K562 (cell line): ENCODE measurements at regions of chr6 and their contacts with region 1.

Region 1: GRCh38 chr6:85496009-85496579 is 46.2 kb downstream of the NT5E start:
- DNase-seq: no peak
- ATAC-seq: no peak
- H3K4me3 ChIP-seq: no peak overlapping the region
- H3K27ac ChIP-seq: no peak overlapping the region
- H3K4me1 ChIP-seq: no peaks in the 10 kb centered on the region
- H3K27me3 ChIP-seq: no peaks in the 10 kb centered on the region; a peak in 1 of 5 replicates
- CTCF ChIP-seq: no peak
- EP300 ChIP-seq: no peak
- POLR2A ChIP-seq: no peak
- RAD21 ChIP-seq: no peak

Region 2: DNA sequence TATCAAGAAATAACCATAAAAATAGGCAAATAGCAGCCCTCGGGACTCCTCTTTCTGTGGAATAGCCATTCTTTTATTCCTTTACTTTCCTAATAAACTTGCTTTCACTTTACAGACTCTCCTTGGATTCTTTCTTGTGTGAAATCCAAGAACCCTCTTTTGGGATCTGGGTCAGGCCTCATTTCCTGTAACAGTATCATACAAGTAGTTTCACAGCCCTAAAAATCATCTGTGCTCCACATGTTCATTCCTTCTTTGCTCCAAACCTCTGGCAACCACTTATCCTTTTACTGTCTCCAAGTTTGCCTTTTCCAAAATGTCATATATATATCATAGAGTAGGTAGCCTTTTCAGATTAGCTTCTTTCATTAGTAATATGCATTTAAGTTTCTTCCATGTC is 59.7 kb before region 1 on chr6:
- CTCF ChIA-PET with region 1: no interaction called
- POLR2A ChIA-PET with region 1: no interaction called
- in situ Hi-C with region 1: no loop called
- intact Hi-C with region 1: no loop called
- DNase-seq: no peak
- ATAC-seq: no peak
- H3K4me3 ChIP-seq: no peak overlapping the region
- H3K27ac ChIP-seq: no peak overlapping the region
- H3K4me1 ChIP-seq: no peaks in the 10 kb centered on the region
- H3K27me3 ChIP-seq: no peaks in the 10 kb centered on the region
- CTCF ChIP-seq: no peak
- EP300 ChIP-seq: no peak
- POLR2A ChIP-seq: no peak
- RAD21 ChIP-seq: no peak

Region 3: GRCh38 chr6:85506441-85507093 is 10.5 kb after region 1 on chr6:
- CTCF ChIA-PET with region 1: no interaction called
- POLR2A ChIA-PET with region 1: interaction called, 10 read pairs
- in situ Hi-C with region 1: no loop called
- intact Hi-C with region 1: no loop called
- DNase-seq: no peak
- ATAC-seq: no peak
- H3K4me3 ChIP-seq: no peak overlapping the region
- H3K27ac ChIP-seq: no peak overlapping the region
- H3K4me1 ChIP-seq: no peaks in the 10 kb centered on the region; a peak in 1 of 5 replicates
- H3K27me3 ChIP-seq: no peaks in the 10 kb centered on the region
- CTCF ChIP-seq: no peak
- EP300 ChIP-seq: no peak
- POLR2A ChIP-seq: no peak
- RAD21 ChIP-seq: no peak